ENCODE measurements at regions of chr12 and their contacts with region 1.

Region 1: DNA sequence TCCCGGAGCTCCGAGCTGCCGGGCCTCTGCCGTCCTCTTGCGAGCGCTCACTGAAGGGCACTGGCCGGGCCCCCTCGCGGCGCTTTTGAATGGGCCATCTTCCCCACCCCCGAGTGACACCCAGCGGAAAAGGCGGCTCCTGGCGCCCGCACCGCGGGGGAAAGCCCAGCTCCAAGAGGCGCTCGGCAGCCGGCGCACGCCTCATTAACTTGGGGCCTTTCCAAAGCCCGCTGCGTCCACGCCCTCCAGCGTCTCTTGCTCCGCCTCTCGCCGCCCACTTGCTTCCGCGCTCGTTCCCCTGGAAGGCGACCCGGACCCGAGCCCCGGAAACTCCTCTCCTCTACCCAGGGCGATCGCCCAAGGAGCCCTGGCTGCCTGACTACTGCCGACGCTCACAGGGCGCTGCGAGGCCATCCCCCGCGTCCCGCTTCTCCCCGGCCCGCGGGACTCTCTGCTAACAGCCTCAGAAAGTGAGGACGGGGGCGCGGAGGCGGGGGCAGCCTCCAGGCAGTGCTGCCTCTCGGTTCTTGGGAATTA is at the start of gene PHLDA1:
- DNase-seq: peak; percentile 84
- ATAC-seq: peak; percentile 85
- H3K4me3 Mint-ChIP-seq: peak within 1 kb of the TSS; percentile 89
- H3K27ac Mint-ChIP-seq: peak within 1 kb of the TSS; percentile 84
- H3K4me1 Mint-ChIP-seq: peaks cover 22% of the 10 kb centered on the region
- H3K27me3 Mint-ChIP-seq: peaks cover 17% of the 10 kb centered on the region
- CTCF ChIP-seq: no peak
- total RNA-seq, gene PHLDA1: 0.83 and 1.1 TPM in 2 replicates

Region 2: GRCh38 chr12:75390899-75391538 is 640.6 kb before region 1 on chr12 and contains the start of gene GLIPR1L2:
- CTCF ChIA-PET with region 1: interaction called, 6 read pairs
- POLR2A ChIA-PET with region 1: no interaction called
- intact Hi-C with region 1: loop called (anchors 1 kb)
- DNase-seq: peak; percentile 86
- ATAC-seq: peak; percentile 95
- H3K4me3 Mint-ChIP-seq: peak within 1 kb of the TSS; percentile 94
- H3K27ac Mint-ChIP-seq: peak within 1 kb of the TSS; percentile 97
- H3K4me1 Mint-ChIP-seq: peaks cover 38% of the 10 kb centered on the region
- H3K27me3 Mint-ChIP-seq: no peaks in the 10 kb centered on the region
- CTCF ChIP-seq: peak; percentile 68
- total RNA-seq, gene GLIPR1L2: 0.20 TPM in 1 of 2 replicates, not detected in the other

Region 3: GRCh38 chr12:75526655-75527511 is 504.7 kb before region 1 on chr12:
- CTCF ChIA-PET with region 1: interaction called, 121 read pairs
- POLR2A ChIA-PET with region 1: interaction called, 9 read pairs
- intact Hi-C with region 1: no loop called
- DNase-seq: no peak
- ATAC-seq: peak; percentile 74
- H3K4me3 Mint-ChIP-seq: no peak overlapping the region
- H3K27ac Mint-ChIP-seq: no peak overlapping the region
- H3K4me1 Mint-ChIP-seq: peaks cover 6% of the 10 kb centered on the region
- H3K27me3 Mint-ChIP-seq: peaks cover 31% of the 10 kb centered on the region
- CTCF ChIP-seq: no peak

Region 4: GRCh38 chr12:75774261-75775052 is 257.1 kb before region 1 on chr12:
- CTCF ChIA-PET with region 1: no interaction called
- POLR2A ChIA-PET with region 1: interaction called, 3 read pairs
- intact Hi-C with region 1: loop called (anchors 5 kb)
- DNase-seq: no peak
- ATAC-seq: peak; percentile 69
- H3K4me3 Mint-ChIP-seq: peak overlapping the region; percentile 28
- H3K27ac Mint-ChIP-seq: no peak overlapping the region
- H3K4me1 Mint-ChIP-seq: peaks cover 20% of the 10 kb centered on the region
- H3K27me3 Mint-ChIP-seq: no peaks in the 10 kb centered on the region
- CTCF ChIP-seq: no peak

Region 5: GRCh38 chr12:75944097-75944904 is 87.3 kb before region 1 on chr12:
- CTCF ChIA-PET with region 1: interaction called, 3 read pairs
- POLR2A ChIA-PET with region 1: interaction called, 6 read pairs
- intact Hi-C with region 1: loop called (anchors 1 kb)
- DNase-seq: no peak
- ATAC-seq: peak; percentile 88
- H3K4me3 Mint-ChIP-seq: peak overlapping the region; percentile 56
- H3K27ac Mint-ChIP-seq: peak overlapping the region; percentile 83
- H3K4me1 Mint-ChIP-seq: peaks cover 18% of the 10 kb centered on the region
- H3K27me3 Mint-ChIP-seq: no peaks in the 10 kb centered on the region
- CTCF ChIP-seq: no peak

Region 6: GRCh38 chr12:76455582-76456345 is 424.2 kb after region 1 on chr12:
- CTCF ChIA-PET with region 1: interaction called, 4 read pairs
- POLR2A ChIA-PET with region 1: no interaction called
- intact Hi-C with region 1: loop called (anchors 5 kb)
- DNase-seq: no peak
- ATAC-seq: peak; percentile 62
- H3K4me3 Mint-ChIP-seq: no peak overlapping the region
- H3K27ac Mint-ChIP-seq: no peak overlapping the region
- H3K4me1 Mint-ChIP-seq: peaks cover 9% of the 10 kb centered on the region
- H3K27me3 Mint-ChIP-seq: no peaks in the 10 kb centered on the region
- CTCF ChIP-seq: no peak

Region 7: DNA sequence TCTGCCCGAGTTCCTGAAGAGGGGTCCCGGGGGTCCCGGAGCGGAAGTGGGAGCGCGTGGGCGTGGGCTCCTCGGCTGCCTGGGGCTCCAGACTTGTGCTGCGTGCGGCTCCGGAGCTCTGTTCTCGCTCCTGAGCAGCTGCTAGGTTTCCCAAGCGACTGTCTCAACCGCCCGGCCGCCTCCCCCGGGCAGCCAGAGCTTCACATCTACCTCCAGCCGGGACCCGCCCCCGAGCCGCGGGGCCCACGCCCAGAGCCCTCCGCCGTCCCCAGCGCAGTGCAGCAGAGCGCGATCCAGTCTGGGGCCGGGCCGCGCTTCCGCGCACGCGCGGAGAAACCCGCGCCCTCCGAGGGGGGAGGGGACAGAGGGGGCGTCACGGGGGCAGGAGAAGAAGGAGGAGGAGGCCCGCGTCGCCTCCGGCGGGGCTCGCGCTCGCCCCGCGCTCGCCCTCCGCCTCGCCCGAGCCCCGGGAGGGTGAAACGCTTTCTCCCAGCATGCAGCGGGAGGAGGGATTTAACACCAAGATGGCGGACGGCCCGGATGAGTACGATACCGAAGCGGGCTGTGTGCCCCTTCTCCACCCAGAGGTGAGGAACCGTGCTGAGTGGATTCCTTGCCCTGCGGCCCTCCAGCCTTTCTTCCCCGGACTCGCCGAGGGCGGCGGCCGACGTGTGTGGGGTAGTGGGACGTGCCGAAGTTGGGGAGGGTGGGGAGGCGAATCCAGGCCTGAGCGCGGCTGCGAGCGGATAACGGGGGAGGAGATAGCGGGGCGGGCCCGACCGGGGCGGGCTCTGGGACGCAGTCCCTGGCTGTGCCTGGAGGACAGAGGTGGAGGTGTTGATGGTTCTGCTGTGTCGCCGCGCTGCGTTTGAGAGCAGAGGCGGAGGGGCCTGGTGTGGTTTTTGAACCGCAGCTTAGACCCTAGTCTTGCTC is 732.4 kb after region 1 on chr12 and contains the start of gene ZDHHC17:
- CTCF ChIA-PET with region 1: no interaction called
- POLR2A ChIA-PET with region 1: no interaction called
- intact Hi-C with region 1: loop called (anchors 5 kb)
- DNase-seq: peak; percentile 96
- ATAC-seq: peak; percentile 87
- H3K4me3 Mint-ChIP-seq: peak within 1 kb of the TSS; percentile 97
- H3K27ac Mint-ChIP-seq: peak within 1 kb of the TSS; percentile 96
- H3K4me1 Mint-ChIP-seq: peaks cover 44% of the 10 kb centered on the region
- H3K27me3 Mint-ChIP-seq: no peaks in the 10 kb centered on the region
- CTCF ChIP-seq: no peak
- total RNA-seq, gene ZDHHC17: 51.8 and 70.8 TPM in 2 replicates